Left ventricle myocardium inferior (tissue), 1 donor: ENCODE measurements at regions of chr12 and their contacts with region 1.

Region 1: GRCh38 chr12:89051065-89051677 is 301.1 kb downstream of the DUSP6 start:
- DNase-seq: no peak
- H3K4me3 ChIP-seq: no peak overlapping the region
- H3K27ac ChIP-seq: no peak overlapping the region
- H3K4me1 ChIP-seq: no peaks in the 10 kb centered on the region
- H3K27me3 ChIP-seq: no peaks in the 10 kb centered on the region
- CTCF ChIP-seq: peak; percentile 95

Region 2: GRCh38 chr12:89156862-89157262 is 105.7 kb after region 1 on chr12:
- intact Hi-C with region 1: loop called (anchors 10 kb)
- DNase-seq: no peak
- H3K4me3 ChIP-seq: no peak overlapping the region
- H3K27ac ChIP-seq: peak overlapping the region; percentile 17
- H3K4me1 ChIP-seq: peaks cover 27% of the 10 kb centered on the region
- H3K27me3 ChIP-seq: no peaks in the 10 kb centered on the region
- CTCF ChIP-seq: no peak

Region 3: GRCh38 chr12:89200217-89200616 is 149.0 kb after region 1 on chr12:
- intact Hi-C with region 1: no loop called
- DNase-seq: no peak
- H3K4me3 ChIP-seq: no peak overlapping the region
- H3K27ac ChIP-seq: no peak overlapping the region
- H3K4me1 ChIP-seq: no peaks in the 10 kb centered on the region
- H3K27me3 ChIP-seq: no peaks in the 10 kb centered on the region
- CTCF ChIP-seq: no peak

Region 4: DNA sequence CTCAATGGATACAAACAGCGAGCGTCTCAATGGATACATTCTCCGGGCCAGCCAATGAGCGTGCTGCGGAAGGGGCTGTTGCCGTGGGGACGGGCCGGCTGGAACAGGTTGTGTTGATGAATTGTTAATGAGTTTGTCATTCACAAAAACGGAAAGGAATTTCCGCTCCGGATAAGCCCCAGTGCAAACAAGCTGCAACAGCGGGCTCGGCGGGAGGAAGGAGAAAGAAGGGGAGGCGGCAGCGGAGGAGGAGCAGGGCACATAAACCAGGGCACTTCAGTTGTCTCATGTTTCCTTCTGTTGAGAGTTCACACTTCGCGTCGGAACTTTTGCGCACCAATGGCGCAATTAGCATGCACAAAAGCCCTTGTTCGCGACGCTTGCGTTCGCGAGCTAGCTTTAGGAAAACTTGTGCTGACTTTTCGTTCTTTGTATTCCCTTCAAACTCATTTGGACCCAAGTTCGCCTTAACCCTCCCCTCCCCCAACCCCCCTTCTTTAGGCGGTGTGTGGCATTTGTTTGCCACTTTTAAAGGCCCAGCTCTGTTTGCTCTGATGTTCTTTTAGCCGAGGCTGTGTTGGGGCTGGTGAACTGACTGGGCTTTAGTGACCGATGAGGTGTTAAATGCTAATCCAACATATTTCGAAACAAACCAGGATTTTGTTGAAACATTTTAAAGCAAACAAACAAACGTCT is 301.5 kb after region 1 on chr12 and contains the start of gene DUSP6:
- intact Hi-C with region 1: loop called (anchors 5 kb)
- DNase-seq: peak; percentile 94
- H3K4me3 ChIP-seq: peak within 1 kb of the TSS; percentile 89
- H3K27ac ChIP-seq: peak within 1 kb of the TSS; percentile 99
- H3K4me1 ChIP-seq: peaks cover 83% of the 10 kb centered on the region
- H3K27me3 ChIP-seq: no peaks in the 10 kb centered on the region
- CTCF ChIP-seq: no peak
- total RNA-seq, gene DUSP6: 16.1 TPM

Region 5: GRCh38 chr12:89461649-89462612 is 410.8 kb after region 1 on chr12:
- intact Hi-C with region 1: loop called (anchors 2 kb)
- DNase-seq: no peak
- H3K4me3 ChIP-seq: peak overlapping the region; percentile 40
- H3K27ac ChIP-seq: peak overlapping the region; percentile 65
- H3K4me1 ChIP-seq: peaks cover 15% of the 10 kb centered on the region
- H3K27me3 ChIP-seq: no peaks in the 10 kb centered on the region
- CTCF ChIP-seq: peak; percentile 76